ENCODE measurements at regions of chr12 and their contacts with region 1.

Region 1: GRCh38 chr12:32467959-32468863 is 68.9 kb downstream of the FGD4 start:
- DNase-seq: no peak

Region 2: GRCh38 chr12:32644431-32644830 is 176.2 kb after region 1 on chr12:
- intact Hi-C with region 1: loop called in 1 of 2 experiments (anchors 10 kb)
- DNase-seq: no peak